ENCODE measurements at regions of chr2 and their contacts with region 1.

Region 1: DNA sequence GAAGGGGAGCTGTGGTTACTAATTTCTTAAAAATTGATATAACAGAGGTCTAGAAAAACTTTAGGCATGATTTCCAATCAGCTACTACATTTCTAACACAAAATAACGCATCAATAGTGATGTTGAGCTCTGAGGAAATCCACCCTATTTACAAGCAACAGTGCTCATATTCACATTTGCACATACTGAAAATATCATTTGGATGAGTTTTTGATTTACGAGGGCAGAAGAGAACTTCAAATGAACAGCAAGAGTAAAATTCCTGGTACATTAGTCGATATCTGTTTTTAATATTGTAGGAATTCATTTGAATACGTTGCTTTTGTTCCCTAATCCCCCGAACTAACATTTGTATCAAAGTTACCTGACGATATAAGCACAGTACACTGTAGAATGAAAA is 761.0 kb upstream of the POU3F3 start:
- DNase-seq: no peak
- H3K4me3 ChIP-seq: no peak overlapping the region
- H3K27ac ChIP-seq: no peak overlapping the region
- H3K4me1 ChIP-seq: no peaks in the 10 kb centered on the region
- H3K27me3 ChIP-seq: no peaks in the 10 kb centered on the region
- CTCF ChIP-seq: no peak
- EP300 ChIP-seq: no peak
- POLR2A ChIP-seq: no peak

Region 2: GRCh38 chr2:104050656-104051242 is 42.1 kb before region 1 on chr2:
- in situ Hi-C with region 1: no loop called
- intact Hi-C with region 1: loop called (anchors 1 kb)
- DNase-seq: no peak
- H3K4me3 ChIP-seq: no peak overlapping the region
- H3K27ac ChIP-seq: no peak overlapping the region
- H3K4me1 ChIP-seq: no peaks in the 10 kb centered on the region
- H3K27me3 ChIP-seq: no peaks in the 10 kb centered on the region
- CTCF ChIP-seq: no peak
- EP300 ChIP-seq: no peak
- POLR2A ChIP-seq: no peak

Measured in transverse colon (tissue), 4 donors.